Activated CD4-positive, alpha-beta memory T cell treated with anti-CD3 and anti-CD28 coated beads, Interleukin-2, amount 10 ng/mL, durations not matched to agents 7 days and 5 days (primary cell): ENCODE measurements at regions of chr1 and their contacts with region 1.

Region 1: GRCh38 chr1:54287176-54287650 is 87.2 kb downstream of the MRPL37 start:
- DNase-seq: peak; percentile 83
- H3K4me3 Mint-ChIP-seq: peak overlapping the region; percentile 44
- H3K27ac Mint-ChIP-seq: peak overlapping the region; percentile 82
- H3K4me1 Mint-ChIP-seq: peaks cover 84% of the 10 kb centered on the region
- H3K27me3 Mint-ChIP-seq: no peaks in the 10 kb centered on the region

Region 2: DNA sequence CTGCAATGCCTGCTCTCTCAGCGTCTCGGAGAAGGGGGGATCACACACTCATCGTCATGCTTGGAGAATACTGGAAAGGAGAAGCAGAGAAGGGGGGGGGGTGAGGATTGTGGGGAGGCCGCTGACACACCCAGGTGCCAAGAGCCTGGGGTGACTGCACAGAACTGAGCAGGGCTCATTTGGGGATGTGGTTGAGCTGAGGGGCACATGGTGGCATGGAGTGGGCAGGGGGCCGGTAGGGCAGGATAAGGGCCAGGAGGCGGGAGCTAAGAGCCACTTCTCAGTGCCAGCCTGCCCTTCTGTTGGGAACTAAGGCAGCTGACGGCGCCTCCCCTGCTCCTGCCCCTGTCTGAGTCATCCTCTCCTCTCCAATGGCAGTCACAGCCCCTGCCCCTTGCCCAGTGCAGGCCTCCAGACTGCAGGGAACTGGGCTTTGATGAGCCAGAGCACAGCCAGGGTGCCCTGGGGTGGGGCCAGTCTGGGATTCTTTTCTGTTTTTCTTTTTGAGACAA is 60.1 kb before region 1 on chr1:
- CTCF ChIA-PET with region 1: interaction called, 3 read pairs
- POLR2A ChIA-PET with region 1: interaction called, 19 read pairs
- DNase-seq: no peak
- H3K4me3 Mint-ChIP-seq: no peak overlapping the region
- H3K27ac Mint-ChIP-seq: peak overlapping the region; percentile 35
- H3K4me1 Mint-ChIP-seq: peaks cover 51% of the 10 kb centered on the region
- H3K27me3 Mint-ChIP-seq: no peaks in the 10 kb centered on the region

Region 3: DNA sequence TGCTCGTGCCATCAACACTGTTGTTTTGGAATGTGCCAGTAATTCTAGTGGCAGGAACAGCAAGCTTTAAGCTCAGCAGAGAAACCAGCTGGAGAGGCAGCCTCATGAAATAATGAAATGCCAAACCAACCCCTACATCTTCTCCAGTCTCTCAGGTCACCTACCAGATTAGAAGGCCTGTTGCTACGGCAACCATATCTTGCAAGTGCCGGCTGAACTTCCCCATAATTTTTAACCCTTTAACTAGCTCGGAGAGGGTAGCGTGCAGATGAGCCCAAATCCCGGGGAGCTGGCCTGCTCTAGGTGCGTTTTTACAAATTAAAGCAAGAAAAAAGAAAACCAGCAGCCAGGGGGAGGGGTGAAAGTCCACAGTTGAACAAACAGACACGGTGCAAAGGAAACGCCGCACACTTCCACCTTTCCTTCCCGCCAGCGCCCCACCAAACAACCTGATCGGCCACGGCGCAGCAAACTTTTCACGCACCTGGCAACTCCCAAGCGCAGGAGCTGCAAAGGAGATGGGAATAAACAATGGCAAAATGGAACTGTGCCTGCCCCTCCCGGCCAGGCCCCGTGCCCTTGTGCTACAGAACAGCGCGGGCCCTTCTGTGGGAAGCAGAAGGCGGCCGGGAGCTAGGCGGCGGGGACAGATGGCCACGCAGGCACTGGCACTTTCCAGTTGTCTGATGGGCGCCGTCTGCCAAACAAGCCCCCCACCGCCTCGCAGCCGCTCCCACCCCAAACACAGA is 68.9 kb after region 1 on chr1:
- CTCF ChIA-PET with region 1: no interaction called
- POLR2A ChIA-PET with region 1: no interaction called
- DNase-seq: no peak
- H3K4me3 Mint-ChIP-seq: peak overlapping the region; percentile 17
- H3K27ac Mint-ChIP-seq: no peak overlapping the region
- H3K4me1 Mint-ChIP-seq: peaks cover 30% of the 10 kb centered on the region
- H3K27me3 Mint-ChIP-seq: no peaks in the 10 kb centered on the region

Region 4: DNA sequence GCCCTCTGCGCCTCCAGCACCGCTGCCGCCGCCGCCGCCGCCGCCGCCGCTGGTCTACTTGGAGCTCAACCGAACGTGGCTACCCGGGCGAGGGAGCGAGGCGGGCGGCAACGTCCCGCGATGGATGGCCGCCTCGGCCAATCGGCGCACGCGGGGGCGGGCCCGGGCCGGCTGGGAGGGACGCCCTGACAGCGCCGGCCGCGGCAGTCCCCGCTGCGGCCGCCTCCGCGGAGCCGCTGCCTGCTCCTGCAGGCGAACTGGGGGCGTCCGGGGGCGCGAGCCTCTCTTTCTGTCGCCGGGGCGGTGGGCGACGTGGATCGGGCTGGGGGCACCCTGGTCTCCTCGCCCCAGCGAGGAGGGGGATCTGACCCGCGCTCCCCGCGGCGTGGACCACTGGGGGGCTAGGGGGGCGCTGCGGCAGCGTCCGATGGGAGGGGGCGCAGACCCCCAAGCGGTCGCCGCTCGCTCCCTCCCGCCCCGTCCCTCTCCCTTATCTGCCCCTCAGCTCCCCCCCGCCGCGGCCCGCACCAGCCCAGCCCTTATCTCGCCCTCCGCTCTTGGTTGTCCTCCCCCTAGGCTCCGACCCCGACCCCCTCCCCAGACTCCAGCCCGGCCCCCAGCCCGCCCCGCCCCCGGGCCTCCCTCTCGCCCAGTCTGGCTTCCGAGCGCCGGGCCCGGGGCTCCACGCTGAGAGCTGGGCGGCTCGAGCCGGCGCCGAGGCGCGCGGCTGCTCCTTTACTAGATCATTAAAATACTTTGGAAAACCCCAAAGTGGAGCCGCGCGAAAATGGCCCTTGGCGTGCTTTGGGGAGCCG is 119.3 kb after region 1 on chr1 and contains the start of gene SSBP3:
- CTCF ChIA-PET with region 1: interaction called, 5 read pairs
- POLR2A ChIA-PET with region 1: interaction called, 11 read pairs
- DNase-seq: peak; percentile 94
- H3K4me3 Mint-ChIP-seq: peak within 1 kb of the TSS; percentile 90
- H3K27ac Mint-ChIP-seq: peak within 1 kb of the TSS; percentile 95
- H3K4me1 Mint-ChIP-seq: peaks cover 66% of the 10 kb centered on the region
- H3K27me3 Mint-ChIP-seq: no peaks in the 10 kb centered on the region
- total RNA-seq, gene SSBP3: 90.0 TPM

Region 5: GRCh38 chr1:54493608-54494007 is 206.4 kb after region 1 on chr1:
- CTCF ChIA-PET with region 1: no interaction called
- POLR2A ChIA-PET with region 1: no interaction called
- DNase-seq: no peak
- H3K4me3 Mint-ChIP-seq: no peak overlapping the region
- H3K27ac Mint-ChIP-seq: no peak overlapping the region
- H3K4me1 Mint-ChIP-seq: peaks cover 13% of the 10 kb centered on the region
- H3K27me3 Mint-ChIP-seq: peaks cover 40% of the 10 kb centered on the region